ENCODE measurements at regions of chr17 and their contacts with region 1.

Region 1: GRCh38 chr17:65231662-65232335 is 94.6 kb downstream of the RGS9 start:
- H3K4me3 Mint-ChIP-seq: no peak overlapping the region
- H3K27ac Mint-ChIP-seq: no peak overlapping the region
- H3K4me1 Mint-ChIP-seq: peaks cover 36% of the 10 kb centered on the region
- H3K27me3 Mint-ChIP-seq: peaks cover 48% of the 10 kb centered on the region

Region 2: DNA sequence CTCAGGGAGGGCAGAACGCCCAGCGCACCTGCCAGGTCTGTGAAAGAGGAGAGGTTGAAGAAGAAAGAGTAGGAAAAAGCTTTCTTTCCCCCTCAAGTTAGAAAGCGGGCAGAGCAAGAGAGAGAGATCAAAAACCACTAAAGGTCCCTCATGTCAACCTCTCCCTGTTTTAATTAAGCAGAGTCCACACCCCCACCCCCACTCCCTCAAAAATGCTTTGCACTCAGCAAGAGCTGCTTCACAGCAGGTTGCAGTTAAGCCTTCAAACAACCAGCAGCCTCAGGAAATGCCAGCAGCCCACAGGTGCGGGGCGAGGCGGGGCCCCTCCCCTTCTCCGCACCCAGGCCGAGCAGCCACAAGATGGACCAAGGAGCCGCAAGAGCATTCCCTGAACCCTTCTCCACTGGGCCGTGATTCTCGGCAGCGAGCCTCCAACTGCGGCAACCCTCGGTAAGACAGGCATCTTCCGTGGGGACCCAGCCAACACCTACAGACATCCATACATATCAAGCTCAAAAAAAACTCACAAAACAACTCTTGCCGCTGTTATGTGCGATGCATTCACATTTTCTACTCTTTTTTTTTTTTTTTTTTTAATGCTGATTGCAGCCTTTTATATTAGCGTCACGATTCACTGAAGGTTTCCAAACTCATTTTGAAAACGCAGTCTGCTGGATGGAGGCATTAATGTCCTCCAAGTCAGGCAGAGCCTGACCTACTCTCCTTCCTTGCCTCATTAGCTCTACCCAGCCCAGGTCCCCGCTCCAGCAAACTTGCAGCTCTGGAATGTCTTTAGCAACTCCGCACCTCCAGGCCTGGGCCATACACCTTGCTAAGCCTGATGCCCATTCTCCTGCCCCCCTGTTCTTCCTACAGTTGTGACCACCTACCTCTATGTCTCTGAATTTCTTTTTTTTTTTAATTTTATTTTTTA is 263.6 kb after region 1 on chr17:
- intact Hi-C with region 1: no loop called
- H3K4me3 Mint-ChIP-seq: no peak overlapping the region
- H3K27ac Mint-ChIP-seq: no peak overlapping the region
- H3K4me1 Mint-ChIP-seq: no peaks in the 10 kb centered on the region
- H3K27me3 Mint-ChIP-seq: peaks cover 20% of the 10 kb centered on the region

Region 3: GRCh38 chr17:65556014-65556909 is 324.5 kb after region 1 on chr17:
- intact Hi-C with region 1: loop called (anchors 1 kb)
- H3K4me3 Mint-ChIP-seq: no peak overlapping the region
- H3K27ac Mint-ChIP-seq: no peak overlapping the region
- H3K4me1 Mint-ChIP-seq: peaks cover 7% of the 10 kb centered on the region
- H3K27me3 Mint-ChIP-seq: peaks cover 13% of the 10 kb centered on the region

Region 4: GRCh38 chr17:65794572-65794971 is 562.8 kb after region 1 on chr17:
- intact Hi-C with region 1: loop called (anchors 10 kb)
- H3K4me3 Mint-ChIP-seq: no peak overlapping the region
- H3K27ac Mint-ChIP-seq: no peak overlapping the region
- H3K4me1 Mint-ChIP-seq: no peaks in the 10 kb centered on the region
- H3K27me3 Mint-ChIP-seq: peaks cover 3% of the 10 kb centered on the region

Region 5: DNA sequence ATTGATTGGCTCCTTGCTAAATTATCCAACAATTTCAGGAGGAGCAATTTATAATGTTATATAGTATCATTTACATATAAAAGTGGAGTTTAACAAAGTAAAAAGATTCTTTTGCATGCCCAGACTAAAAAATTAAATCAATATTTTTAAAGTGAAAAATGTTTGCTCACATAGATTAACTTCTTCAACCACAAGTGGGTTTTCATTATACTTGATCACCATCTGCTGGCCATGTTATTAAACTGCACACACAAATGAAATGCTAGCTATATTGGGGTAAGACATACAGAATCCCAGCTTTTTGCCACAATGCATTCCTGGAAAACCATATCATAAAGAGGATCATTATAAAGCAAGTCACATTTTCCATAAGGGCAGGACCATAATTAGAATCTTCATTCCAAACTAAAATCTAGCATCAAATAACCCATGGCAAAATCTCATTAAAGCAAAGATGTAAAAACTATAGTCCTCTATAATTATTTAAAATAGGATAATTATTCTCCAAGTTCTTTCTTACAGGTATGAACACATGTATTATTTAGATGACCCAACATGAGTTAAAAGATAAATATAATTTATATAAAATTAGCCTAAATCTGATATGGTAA is 933.8 kb after region 1 on chr17:
- intact Hi-C with region 1: loop called (anchors 2 kb)
- H3K4me3 Mint-ChIP-seq: no peak overlapping the region
- H3K27ac Mint-ChIP-seq: no peak overlapping the region
- H3K4me1 Mint-ChIP-seq: no peaks in the 10 kb centered on the region
- H3K27me3 Mint-ChIP-seq: no peaks in the 10 kb centered on the region

Measured in dendritic cell treated with granulocyte-macrophage colony-stimulating factor and Interleukin-4, amounts not matched to agents 40 ng/mL and 50 ng/mL, for 4 days (primary cell).